ENCODE measurements at regions of chr10 and their contacts with region 1.

Region 1: GRCh38 chr10:5094265-5095205 is at the start of gene AKR1C3:
- DNase-seq: no peak
- ATAC-seq: peak; percentile 91 to 94
- H3K4me3 ChIP-seq: peak within 1 kb of the TSS; percentile 59 to 86 (median 62)
- H3K27ac ChIP-seq: peak within 1 kb of the TSS; percentile 65 to 83 (median 76)
- H3K4me1 ChIP-seq: peaks cover 8 to 18% of the 10 kb centered on the region in 2 donors
- H3K27me3 ChIP-seq: no peaks in the 10 kb centered on the region
- CTCF ChIP-seq: peak; percentile 65 to 76 (median 72)
- POLR2A ChIP-seq: peak; percentile 19 to 48
- total RNA-seq, gene AKR1C3: 48.3 to 293 (median 197) TPM

Region 2: GRCh38 chr10:4977025-4977424 is 117.5 kb before region 1 on chr10:
- in situ Hi-C with region 1: no loop called
- intact Hi-C with region 1: no loop called
- DNase-seq: no peak
- ATAC-seq: no peak
- H3K4me3 ChIP-seq: no peak overlapping the region
- H3K27ac ChIP-seq: no peak overlapping the region
- H3K4me1 ChIP-seq: peaks cover 0 to 4% of the 10 kb centered on the region in 2 donors
- H3K27me3 ChIP-seq: no peaks in the 10 kb centered on the region
- CTCF ChIP-seq: no peak
- POLR2A ChIP-seq: no peak

Region 3: DNA sequence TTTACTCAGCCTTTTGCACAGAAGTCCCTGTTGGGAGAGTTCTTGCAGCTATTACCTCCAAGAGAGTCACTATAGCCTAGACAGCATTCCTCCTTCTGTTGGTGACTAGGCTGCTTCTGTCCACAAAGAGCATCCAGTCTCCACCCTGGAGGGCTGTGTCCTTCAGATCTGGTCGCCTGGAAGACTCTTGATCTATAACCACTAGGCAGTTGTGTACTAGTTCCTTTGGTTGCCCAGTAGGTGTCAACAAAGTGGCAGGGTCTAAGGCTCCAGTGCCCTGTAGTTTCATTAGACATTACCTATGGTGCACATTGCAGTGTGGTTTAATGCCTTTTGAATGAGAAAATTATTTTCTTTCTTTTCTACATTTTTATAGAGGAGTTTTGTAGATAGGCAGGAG is 79.6 kb before region 1 on chr10:
- in situ Hi-C with region 1: no loop called
- intact Hi-C with region 1: loop called (anchors 5 kb)
- DNase-seq: no peak
- ATAC-seq: peak; percentile 34 to 41
- H3K4me3 ChIP-seq: no peak overlapping the region
- H3K27ac ChIP-seq: no peak overlapping the region
- H3K4me1 ChIP-seq: peaks cover 23 to 42% of the 10 kb centered on the region in 2 donors
- H3K27me3 ChIP-seq: no peaks in the 10 kb centered on the region
- CTCF ChIP-seq: peak in 2 of 5 experiments; percentile 14 to 23
- POLR2A ChIP-seq: no peak

Region 4: GRCh38 chr10:5283305-5284158 is 189.0 kb after region 1 on chr10:
- in situ Hi-C with region 1: loop called in 1 of 4 experiments (anchors 10 kb)
- intact Hi-C with region 1: loop called (anchors 10 kb)
- DNase-seq: peak; percentile 19 to 49
- ATAC-seq: peak; percentile 78 to 87
- H3K4me3 ChIP-seq: no peak overlapping the region
- H3K27ac ChIP-seq: no peak overlapping the region
- H3K4me1 ChIP-seq: no peaks in the 10 kb centered on the region
- H3K27me3 ChIP-seq: no peaks in the 10 kb centered on the region
- CTCF ChIP-seq: peak; percentile 40 to 62 (median 57)
- POLR2A ChIP-seq: no peak

Measured in gastrocnemius medialis (tissue), 4 donors.